HepG2 (cell line): ENCODE measurements at regions of chr5 and their contacts with region 1.

Region 1: DNA sequence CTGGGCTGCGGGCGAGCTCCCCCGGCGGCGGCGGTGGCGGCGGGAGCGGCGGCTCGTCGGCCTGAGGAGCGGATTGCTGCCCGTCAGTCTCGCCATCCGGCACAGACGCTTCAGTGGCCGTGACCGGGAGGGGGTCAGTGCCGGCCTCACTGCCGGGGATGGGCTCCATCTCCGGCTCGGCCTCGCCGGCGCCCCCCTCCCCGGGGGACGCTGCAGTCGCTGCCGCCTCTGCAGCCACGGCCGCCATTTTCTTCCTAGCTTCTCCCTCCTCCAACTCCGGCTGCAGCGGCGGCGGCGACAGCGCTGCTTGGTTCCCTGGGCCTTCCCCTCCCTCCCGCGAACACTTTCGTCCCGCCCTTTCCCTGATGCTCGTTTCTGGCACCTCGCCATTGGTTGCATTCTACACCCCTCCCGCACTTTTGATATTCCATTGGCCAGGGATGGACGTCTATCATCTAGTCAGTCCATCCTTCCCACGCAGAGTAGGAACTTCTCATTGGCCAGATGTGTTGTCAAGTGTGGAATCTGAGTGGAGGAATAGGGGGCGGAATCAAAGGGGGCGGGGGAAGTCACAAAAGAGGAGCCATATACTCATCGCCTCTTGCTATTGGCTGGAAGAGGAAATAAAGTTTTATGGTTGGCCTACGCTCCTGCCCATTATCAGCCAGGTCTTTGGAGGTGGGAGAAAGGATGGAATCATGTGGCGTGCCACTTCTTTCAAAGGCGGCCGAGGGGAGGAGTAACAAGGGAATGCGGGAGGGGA is at the start of gene PWWP2A:
- DNase-seq: peak; percentile 100
- ATAC-seq: peak; percentile 96
- H3K4me3 ChIP-seq: peak within 1 kb of the TSS; percentile 81 to 94 (median 91)
- H3K27ac ChIP-seq: peak within 1 kb of the TSS; percentile 87
- H3K4me1 ChIP-seq: peaks cover 17% of the 10 kb centered on the region
- H3K27me3 ChIP-seq: no peaks in the 10 kb centered on the region
- CTCF ChIP-seq: no peak; the same call in 1 of the 2 replicates
- EP300 ChIP-seq: no peak
- POLR2A ChIP-seq: peak; percentile 85 to 86
- RAD21 ChIP-seq: peak; percentile 37
- total RNA-seq, gene PWWP2A: 16.9 and 23.9 TPM in 2 replicates

Region 2: DNA sequence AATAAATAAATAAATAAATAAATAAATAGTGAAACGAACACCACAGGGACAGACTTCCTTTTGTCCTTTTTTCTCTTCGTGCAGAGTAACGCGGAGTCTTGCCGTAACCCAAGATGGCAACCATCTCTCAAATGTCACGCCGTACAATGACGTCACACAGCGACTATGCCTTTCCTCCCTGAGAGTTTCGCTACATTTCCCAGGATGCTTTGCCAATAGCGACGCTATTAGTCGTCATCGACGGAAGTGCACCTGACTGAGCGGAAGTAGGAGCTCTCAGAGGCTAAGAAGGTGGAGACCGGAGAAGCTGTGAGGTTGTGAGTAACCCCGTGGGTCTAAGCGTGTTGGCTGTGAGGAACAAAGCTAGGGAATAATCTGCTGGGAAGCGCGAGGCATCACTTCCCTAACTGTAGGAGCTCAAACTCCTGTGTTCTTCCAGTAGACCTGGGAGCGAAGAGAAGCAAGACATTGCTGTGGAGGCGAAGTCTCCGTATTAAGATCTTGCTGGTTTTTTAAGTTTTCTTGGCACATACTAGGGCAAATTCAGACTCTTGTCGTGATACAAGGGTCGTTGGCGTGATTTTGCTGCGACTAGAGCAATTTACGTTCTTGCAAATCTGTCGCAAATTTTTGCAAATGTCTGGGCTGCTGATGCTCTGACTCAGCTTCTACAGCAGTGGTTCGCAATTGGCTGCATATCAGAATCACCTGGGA is 110.3 kb before region 1 on chr5 and contains the start of gene TTC1:
- CTCF ChIA-PET with region 1: no interaction called
- POLR2A ChIA-PET with region 1: interaction called, 4 read pairs
- in situ Hi-C with region 1: no loop called
- intact Hi-C with region 1: loop called (anchors 1 kb)
- DNase-seq: peak; percentile 98
- ATAC-seq: peak; percentile 98
- H3K4me3 ChIP-seq: peak within 1 kb of the TSS; percentile 65 to 84 (median 81)
- H3K27ac ChIP-seq: peak within 1 kb of the TSS; percentile 70
- H3K4me1 ChIP-seq: peaks cover 44% of the 10 kb centered on the region
- H3K27me3 ChIP-seq: no peaks in the 10 kb centered on the region; a peak in 1 of 5 replicates
- CTCF ChIP-seq: no peak
- EP300 ChIP-seq: no peak
- POLR2A ChIP-seq: peak; percentile 94
- RAD21 ChIP-seq: no peak
- total RNA-seq, gene TTC1: 72.1 and 104 TPM in 2 replicates

Region 3: GRCh38 chr5:160165137-160166068 is 46.1 kb after region 1 on chr5:
- CTCF ChIA-PET with region 1: no interaction called
- POLR2A ChIA-PET with region 1: interaction called, 4 read pairs
- in situ Hi-C with region 1: no loop called
- intact Hi-C with region 1: loop called (anchors 5 kb)
- DNase-seq: peak; percentile 82
- ATAC-seq: peak; percentile 91
- H3K4me3 ChIP-seq: peak overlapping the region in 2 of 3 experiments; percentile 34 to 56; a peak in 4 of 6 replicates
- H3K27ac ChIP-seq: no peak overlapping the region
- H3K4me1 ChIP-seq: peaks cover 41% of the 10 kb centered on the region
- H3K27me3 ChIP-seq: 0 out of 5 replicates have a peak, but pooled peaks cover 0 to 4% of the 10 kb centered on the region in 2 experiments
- CTCF ChIP-seq: no peak
- EP300 ChIP-seq: peak in 1 of 2 experiments; percentile 29; a peak in 1 of 4 replicates
- POLR2A ChIP-seq: 0 out of 4 replicates have a peak, but pooled peaks of 1 of the 2 experiments have one; percentile 25
- RAD21 ChIP-seq: no peak

Region 4: GRCh38 chr5:160342403-160342941 is 223.1 kb after region 1 on chr5:
- CTCF ChIA-PET with region 1: no interaction called
- POLR2A ChIA-PET with region 1: no interaction called
- in situ Hi-C with region 1: no loop called
- intact Hi-C with region 1: no loop called
- DNase-seq: no peak
- ATAC-seq: no peak
- H3K4me3 ChIP-seq: no peak overlapping the region
- H3K27ac ChIP-seq: no peak overlapping the region
- H3K4me1 ChIP-seq: no peaks in the 10 kb centered on the region
- H3K27me3 ChIP-seq: peaks cover 0 to 3% of the 10 kb centered on the region in 2 experiments; a peak in 1 of 5 replicates
- CTCF ChIP-seq: no peak
- EP300 ChIP-seq: no peak
- POLR2A ChIP-seq: no peak
- RAD21 ChIP-seq: no peak